ENCODE measurements at regions of chr2 and their contacts with region 1.

Region 1: GRCh38 chr2:232438951-232439757 is 16.8 kb upstream of the ALPI start:
- DNase-seq: no peak
- CTCF ChIP-seq: peak; percentile 60

Region 2: DNA sequence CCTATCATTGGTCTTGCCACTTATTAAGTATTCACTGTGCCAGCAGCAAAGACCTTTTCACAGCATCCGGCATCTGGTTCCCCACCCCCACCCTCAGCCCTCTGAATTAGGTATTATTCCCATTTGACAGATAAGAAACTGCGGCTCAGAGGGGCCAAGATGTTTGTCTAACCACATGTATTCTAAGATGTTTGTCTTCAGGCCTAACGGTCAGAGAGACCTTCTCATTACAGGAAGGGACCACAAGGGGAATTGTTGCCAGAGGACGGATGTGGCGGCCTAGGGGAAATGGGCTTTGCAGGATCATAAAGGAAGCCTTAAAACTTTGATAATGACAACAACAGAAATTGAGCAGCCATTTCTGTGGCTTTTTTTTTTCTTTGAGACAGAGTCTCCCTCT is 529.5 kb before region 1 on chr2:
- CTCF ChIA-PET with region 1: interaction called, 15 read pairs
- POLR2A ChIA-PET with region 1: no interaction called
- DNase-seq: no peak
- CTCF ChIP-seq: no peak

Region 3: DNA sequence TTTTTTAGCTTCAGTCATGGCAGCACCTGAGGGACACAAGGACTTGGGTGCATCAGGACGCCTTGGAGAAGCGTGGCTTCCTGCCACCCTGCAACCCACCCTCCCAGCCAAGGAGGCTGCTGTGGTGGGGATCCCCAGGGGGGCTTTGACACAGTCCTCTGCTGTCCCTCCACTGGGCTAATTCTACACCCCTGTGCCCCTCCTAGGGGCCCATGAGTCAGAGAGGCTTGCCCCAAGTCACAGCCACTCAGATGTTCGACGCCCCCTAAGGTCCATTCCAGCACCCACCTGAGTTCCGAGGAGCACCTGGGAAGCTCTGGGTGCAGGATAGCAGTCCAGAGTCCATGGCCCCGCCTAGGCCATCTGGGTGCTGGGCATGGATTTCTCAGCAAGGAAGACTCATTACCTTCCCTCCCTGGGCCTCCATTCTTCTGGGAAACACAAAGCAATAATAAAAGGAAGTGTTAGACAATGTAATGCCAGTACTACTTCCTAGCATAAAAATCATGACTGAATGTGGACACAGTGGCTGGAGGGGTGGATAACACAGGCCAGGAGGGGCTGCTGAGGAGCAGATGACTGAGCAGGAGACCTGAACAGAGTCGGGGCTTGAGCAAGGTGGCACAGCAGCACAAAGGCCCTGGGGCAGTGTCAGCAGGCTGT is 28.8 kb before region 1 on chr2:
- CTCF ChIA-PET with region 1: interaction called, 12 read pairs
- POLR2A ChIA-PET with region 1: no interaction called
- DNase-seq: no peak
- CTCF ChIP-seq: no peak

Region 4: DNA sequence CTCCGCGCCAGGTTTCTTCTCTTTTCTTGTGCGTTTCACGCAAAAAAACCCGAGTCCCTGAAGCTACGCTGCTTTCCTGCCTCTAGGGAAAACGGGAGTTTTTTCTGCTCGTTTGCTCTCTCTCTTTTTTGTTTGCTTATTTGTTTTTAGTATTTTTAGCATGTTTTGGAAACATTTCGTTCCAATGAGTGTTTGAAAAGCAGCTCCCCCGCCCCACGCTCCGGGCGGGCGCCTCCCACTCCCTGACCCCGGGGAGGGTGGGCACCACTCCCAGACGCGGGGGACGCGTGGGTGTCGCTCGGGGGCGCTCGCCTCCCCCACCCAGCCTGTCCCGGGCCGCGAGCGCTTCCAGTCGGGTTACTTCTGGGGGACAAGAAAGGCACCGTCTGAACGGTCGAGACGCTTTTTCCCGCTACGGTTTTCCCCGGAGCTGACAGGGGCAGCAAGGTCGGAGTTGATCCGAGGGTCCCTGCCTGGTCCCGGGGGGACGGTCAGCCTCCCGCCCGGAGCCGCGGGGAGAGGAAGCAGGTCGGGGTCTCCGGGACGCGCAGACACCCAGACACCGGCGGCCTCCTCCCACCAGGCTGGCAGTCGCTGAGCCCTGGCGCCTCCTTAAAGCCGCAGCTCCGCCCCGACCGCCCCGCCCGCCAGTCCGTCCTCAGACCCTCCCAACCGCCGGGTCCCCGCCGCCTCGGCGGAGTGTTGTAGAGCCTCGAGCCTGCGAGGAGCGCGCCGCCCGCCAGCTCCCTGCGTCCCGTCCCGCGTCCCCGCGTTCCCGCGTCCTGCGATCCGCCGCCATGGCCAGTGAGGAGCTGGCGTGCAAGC is 194.0 kb after region 1 on chr2 and contains the start of gene EFHD1:
- CTCF ChIA-PET with region 1: no interaction called
- POLR2A ChIA-PET with region 1: no interaction called
- DNase-seq: peak; percentile 55
- CTCF ChIP-seq: no peak